RWPE1 (cell line): ENCODE measurements at regions of chr6 and their contacts with region 1.

Region 1: DNA sequence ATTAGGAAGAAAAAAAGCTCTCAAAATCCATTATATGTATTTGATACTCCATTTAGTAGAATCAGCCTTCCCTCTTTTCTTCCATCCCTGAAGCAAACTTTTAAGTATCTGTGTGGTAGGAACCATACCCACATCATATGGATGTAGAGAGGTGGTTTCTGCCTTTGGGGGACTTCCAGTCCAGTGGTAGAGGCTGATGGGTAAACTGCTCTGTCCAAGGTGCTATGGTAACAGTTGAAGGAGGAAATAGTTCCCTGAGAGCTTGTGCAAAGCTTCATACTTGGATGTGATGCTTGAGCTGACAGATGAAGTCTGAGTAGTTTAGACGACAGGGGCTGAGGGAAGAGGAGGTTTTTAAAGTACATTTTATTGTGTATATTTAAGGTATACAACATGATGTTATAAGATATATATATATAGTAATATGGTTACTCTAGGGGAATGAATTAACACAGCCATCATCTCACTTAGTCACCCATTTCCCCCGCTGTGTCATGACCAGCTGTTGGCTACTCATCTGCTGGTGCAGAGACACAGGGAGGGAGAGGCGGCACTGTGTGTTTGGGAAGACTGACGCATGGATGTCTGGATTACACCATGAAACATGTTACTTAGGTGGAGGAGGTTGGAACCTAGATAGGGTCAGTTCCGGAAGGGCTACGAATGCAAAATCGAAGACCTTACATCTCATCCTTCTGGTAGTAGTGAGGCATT is 185.2 kb downstream of the FARS2 start:
- DNase-seq: no peak
- H3K27ac ChIP-seq: no peak overlapping the region
- CTCF ChIP-seq: no peak

Region 2: DNA sequence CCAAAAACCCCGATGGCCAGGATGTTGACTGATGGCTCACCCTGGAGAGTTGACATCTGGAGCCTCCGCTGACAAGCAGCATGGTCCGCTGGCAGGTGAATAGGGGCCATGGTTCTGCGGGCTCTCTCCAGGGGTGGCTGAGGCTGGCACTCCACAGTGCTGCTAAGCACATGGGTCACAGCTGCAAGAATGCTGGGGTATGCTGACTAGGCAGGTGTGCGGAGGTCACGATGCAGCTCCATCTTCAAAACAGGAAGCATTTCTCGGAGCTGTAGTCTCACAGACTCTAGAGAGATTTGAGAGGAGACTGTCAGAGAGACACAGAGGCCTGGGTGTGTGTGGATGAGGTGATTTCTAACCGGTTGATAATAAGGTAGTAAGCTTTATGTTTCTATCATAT is 218.7 kb after region 1 on chr6:
- CTCF ChIA-PET with region 1: no interaction called
- POLR2A ChIA-PET with region 1: no interaction called
- DNase-seq: no peak
- H3K27ac ChIP-seq: no peak overlapping the region
- CTCF ChIP-seq: no peak

Region 3: DNA sequence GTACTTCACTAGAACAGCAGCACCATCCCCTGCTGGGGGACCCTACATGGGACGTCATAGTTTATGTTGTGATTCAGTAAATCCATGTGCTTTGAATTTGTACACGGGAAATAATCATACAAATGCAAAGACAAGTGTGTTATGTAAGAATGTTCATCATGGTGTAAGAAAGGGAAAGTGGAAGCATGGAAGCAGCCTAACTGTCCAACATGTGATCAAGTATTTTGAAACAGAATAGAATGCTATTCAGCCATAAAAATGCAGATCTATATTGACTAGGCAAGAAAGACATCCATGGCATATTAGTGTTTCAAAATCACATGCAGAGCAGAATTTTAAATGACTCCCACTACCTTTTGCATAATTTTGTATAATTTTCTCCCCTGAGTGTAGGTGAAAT is 756.4 kb after region 1 on chr6:
- CTCF ChIA-PET with region 1: no interaction called
- POLR2A ChIA-PET with region 1: interaction called, 13 read pairs
- DNase-seq: no peak
- H3K27ac ChIP-seq: no peak overlapping the region
- CTCF ChIP-seq: no peak